WTC11 (cell line): ENCODE measurements at regions of chr12 and their contacts with region 1.

Region 1: DNA sequence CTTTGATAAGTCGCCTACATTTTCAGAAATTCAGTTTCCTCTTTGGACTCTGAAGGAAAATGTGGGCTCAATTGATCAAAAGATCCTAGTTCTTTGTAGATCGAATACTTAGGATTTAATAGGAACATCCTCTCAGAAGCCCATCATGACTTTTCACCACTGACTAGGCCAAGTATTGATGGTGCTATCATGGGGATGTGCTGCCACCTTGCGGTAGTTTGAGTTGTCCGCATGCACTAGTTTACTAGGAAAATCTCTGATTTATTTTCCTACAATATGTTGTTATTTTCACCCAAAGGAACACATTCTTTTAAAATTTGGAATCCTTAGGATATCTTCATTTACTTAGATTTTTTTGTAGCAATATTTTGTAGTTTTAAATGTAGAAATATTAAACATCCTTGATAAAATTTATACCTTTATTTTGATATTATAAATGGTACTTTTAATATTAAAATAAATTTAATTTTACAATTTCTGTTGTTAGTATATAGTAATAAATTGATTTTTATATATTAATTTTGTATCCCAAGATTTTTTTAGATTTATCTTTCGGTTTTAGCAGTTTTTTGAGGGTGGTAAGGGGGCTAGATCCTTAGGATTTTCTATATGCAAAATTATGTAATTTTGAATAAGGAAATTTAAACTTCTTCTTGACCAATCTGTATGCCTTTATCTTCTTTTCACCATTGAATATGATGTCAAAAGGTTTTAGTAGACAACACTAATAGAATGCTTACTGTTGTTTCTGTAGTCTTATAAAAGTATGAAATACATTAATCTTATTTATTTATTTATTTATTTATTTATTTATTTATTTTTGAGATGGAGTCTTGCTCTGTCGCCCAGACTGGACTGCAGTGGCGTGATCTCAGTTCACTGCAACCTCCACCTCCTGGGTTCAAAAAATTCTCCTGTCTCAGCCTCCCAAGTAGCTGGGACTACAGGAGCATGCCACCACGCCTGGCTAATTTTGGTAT is 52.9 kb upstream of the OR9K2 start:
- DNase-seq: peak; percentile 78
- ATAC-seq: peak; percentile 23; the same call in 1 of the 2 replicates
- H3K4me3 Mint-ChIP-seq: no peak overlapping the region
- H3K27ac Mint-ChIP-seq: no peak overlapping the region
- H3K4me1 Mint-ChIP-seq: peaks cover under 1% of the 10 kb centered on the region
- H3K27me3 Mint-ChIP-seq: no peaks in the 10 kb centered on the region
- CTCF ChIP-seq: peak; percentile 52

Region 2: GRCh38 chr12:54701940-54702592 is 371.3 kb before region 1 on chr12:
- CTCF ChIA-PET with region 1: interaction called, 32 read pairs
- POLR2A ChIA-PET with region 1: no interaction called
- DNase-seq: no peak
- ATAC-seq: peak; percentile 69
- H3K4me3 Mint-ChIP-seq: no peak overlapping the region
- H3K27ac Mint-ChIP-seq: no peak overlapping the region
- H3K4me1 Mint-ChIP-seq: peaks cover 22% of the 10 kb centered on the region
- H3K27me3 Mint-ChIP-seq: no peaks in the 10 kb centered on the region
- CTCF ChIP-seq: peak; percentile 43

Region 3: GRCh38 chr12:54958048-54958658 is 115.2 kb before region 1 on chr12:
- CTCF ChIA-PET with region 1: interaction called, 28 read pairs
- POLR2A ChIA-PET with region 1: no interaction called
- DNase-seq: peak; percentile 33
- ATAC-seq: no peak; the same call in 1 of the 2 replicates
- H3K4me3 Mint-ChIP-seq: no peak overlapping the region
- H3K27ac Mint-ChIP-seq: no peak overlapping the region
- H3K4me1 Mint-ChIP-seq: peaks cover 24% of the 10 kb centered on the region
- H3K27me3 Mint-ChIP-seq: peaks cover 4% of the 10 kb centered on the region; the same call in 1 of the 2 replicates
- CTCF ChIP-seq: peak; percentile 29; the same call in 1 of the 2 replicates

Region 4: DNA sequence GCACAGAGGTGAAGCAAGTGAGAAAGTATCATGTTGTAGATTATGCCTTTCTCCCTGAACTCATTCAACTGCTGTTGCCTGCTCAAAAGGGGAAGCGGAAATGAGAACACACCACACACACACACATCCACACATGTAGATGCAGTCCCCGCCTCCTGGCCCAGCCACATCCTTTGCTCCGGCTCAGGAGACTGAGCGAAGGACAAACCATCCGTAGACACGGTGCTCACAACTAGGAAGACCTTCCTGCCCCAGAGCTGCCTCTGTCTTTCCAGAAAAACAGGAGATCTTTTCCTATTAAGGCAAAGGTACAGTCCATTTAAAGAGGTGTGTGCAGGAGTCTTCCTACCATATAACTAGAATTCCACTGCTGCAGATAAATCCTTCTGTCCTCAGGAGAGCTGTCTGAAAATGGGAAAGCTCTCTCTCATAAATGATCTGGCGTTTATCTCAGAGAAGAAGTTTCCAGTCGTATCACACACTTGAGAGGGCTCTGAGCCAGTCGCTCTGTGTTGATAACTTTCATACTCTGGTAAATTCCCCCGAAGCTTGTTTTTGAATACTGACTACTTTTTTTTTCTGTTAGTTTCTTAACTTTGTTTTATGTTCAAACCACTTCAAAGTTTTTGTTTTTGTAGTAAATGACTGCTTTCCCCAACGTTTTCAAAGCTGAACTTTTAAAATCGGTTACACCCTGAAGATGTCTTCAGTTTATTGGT is 88.5 kb before region 1 on chr12 and contains the start of gene TESPA1:
- CTCF ChIA-PET with region 1: interaction called, 26 read pairs
- POLR2A ChIA-PET with region 1: no interaction called
- DNase-seq: no peak
- ATAC-seq: no peak
- H3K4me3 Mint-ChIP-seq: no peak within 1 kb of the TSS
- H3K27ac Mint-ChIP-seq: no peak within 1 kb of the TSS
- H3K4me1 Mint-ChIP-seq: no peaks in the 10 kb centered on the region
- H3K27me3 Mint-ChIP-seq: no peaks in the 10 kb centered on the region
- CTCF ChIP-seq: no peak
- total RNA-seq, gene TESPA1: 0.21 to 0.39 TPM (median 0.25 TPM) in 3 replicates

Region 5: DNA sequence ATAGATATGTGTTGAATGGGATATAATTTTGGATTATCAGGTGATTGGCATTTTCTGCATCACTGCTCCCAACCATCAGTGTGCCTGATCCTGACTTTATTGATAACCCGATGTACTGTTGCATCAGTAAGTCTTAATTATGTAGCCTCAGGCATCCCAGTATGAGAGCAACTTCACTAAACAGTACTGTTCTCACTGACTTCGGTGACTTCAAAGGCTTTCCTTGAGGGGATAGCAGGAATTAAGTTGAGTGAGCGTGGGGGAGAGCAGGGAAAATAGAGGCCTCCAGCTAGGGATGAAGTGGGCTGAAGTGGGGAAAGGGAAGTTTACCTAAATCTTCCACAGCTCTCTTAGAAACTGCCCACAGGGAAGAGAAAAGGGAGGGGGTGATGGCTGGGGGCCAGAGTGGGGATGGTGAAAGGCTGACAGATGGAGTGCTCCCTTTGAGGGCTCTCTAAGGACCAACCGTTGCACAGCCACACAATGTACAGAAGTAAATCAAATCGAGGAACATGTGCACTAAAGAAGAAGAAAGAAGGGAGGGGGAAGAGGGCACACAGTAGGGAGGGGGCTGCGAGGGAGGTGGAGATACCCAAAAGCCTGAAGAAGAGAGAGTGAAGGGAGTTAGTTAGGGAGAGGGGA is 64.3 kb before region 1 on chr12:
- CTCF ChIA-PET with region 1: interaction called, 18 read pairs
- POLR2A ChIA-PET with region 1: no interaction called
- DNase-seq: no peak
- ATAC-seq: no peak
- H3K4me3 Mint-ChIP-seq: no peak overlapping the region
- H3K27ac Mint-ChIP-seq: no peak overlapping the region
- H3K4me1 Mint-ChIP-seq: peaks cover 15% of the 10 kb centered on the region
- H3K27me3 Mint-ChIP-seq: peaks cover 7% of the 10 kb centered on the region; the same call in 1 of the 2 replicates
- CTCF ChIP-seq: no peak

Region 6: GRCh38 chr12:55043542-55043941 is 29.8 kb before region 1 on chr12:
- CTCF ChIA-PET with region 1: interaction called, 12 read pairs
- POLR2A ChIA-PET with region 1: no interaction called
- DNase-seq: no peak
- ATAC-seq: no peak
- H3K4me3 Mint-ChIP-seq: no peak overlapping the region
- H3K27ac Mint-ChIP-seq: no peak overlapping the region
- H3K4me1 Mint-ChIP-seq: peaks cover 33% of the 10 kb centered on the region
- H3K27me3 Mint-ChIP-seq: peaks cover 2% of the 10 kb centered on the region; the same call in 1 of the 2 replicates
- CTCF ChIP-seq: no peak